Activated B cell treated with CpG ODN at 0.5 μM for 24 hours (primary cell): ENCODE measurements at regions of chr15 and their contacts with region 1.

Region 1: GRCh38 chr15:52078876-52079700 is 33.5 kb downstream of the BCL2L10 start:
- DNase-seq: peak; percentile 60
- ATAC-seq: peak; percentile 68
- H3K4me3 Mint-ChIP-seq: no peak overlapping the region
- H3K27ac Mint-ChIP-seq: no peak overlapping the region
- H3K4me1 Mint-ChIP-seq: peaks cover 23% of the 10 kb centered on the region
- H3K27me3 Mint-ChIP-seq: no peaks in the 10 kb centered on the region
- CTCF ChIP-seq: peak; percentile 76

Region 2: GRCh38 chr15:51888593-51889195 is 190.4 kb before region 1 on chr15:
- CTCF ChIA-PET with region 1: interaction called, 8 read pairs
- POLR2A ChIA-PET with region 1: no interaction called
- intact Hi-C with region 1: loop called (anchors 1 kb)
- DNase-seq: no peak
- ATAC-seq: no peak
- H3K4me3 Mint-ChIP-seq: no peak overlapping the region
- H3K27ac Mint-ChIP-seq: no peak overlapping the region
- H3K4me1 Mint-ChIP-seq: peaks cover 4% of the 10 kb centered on the region
- H3K27me3 Mint-ChIP-seq: no peaks in the 10 kb centered on the region
- CTCF ChIP-seq: peak; percentile 58

Region 3: DNA sequence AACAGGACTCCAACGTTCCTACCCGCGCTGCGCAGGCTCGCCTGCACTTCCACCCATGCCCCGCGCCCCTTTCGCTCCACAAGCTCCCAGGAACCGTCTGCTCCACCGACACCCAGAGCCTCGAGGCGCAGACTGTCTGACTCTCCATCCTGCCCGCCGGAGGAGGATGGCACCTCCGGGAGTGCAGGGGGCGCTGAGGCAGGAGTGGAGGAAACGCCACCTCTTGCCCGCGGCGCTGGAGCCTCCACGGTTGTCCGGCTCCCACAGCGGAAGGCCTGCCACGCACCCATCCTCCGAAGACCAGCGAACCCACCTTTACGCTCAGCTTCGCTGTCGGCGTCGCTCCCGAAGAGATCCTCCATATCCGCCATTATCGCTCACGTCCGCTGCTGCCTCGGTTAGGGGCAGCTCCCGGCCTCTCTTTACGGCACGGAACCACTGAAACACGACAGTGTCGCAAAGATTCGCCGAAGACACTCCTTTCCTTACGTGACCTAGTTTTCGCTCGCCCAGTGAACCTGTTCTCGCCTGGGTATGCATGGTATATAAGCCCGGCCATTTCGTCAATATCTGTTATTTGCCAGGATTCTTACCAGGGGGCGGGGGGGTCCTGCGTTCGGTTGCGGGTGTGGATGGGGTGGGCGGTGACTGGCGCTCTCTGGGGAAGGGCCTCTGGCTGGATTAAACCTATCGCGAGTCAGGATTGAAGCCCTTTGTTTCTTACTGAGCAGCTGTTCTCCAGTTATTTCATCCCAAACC is 107.5 kb before region 1 on chr15 and contains the start of gene LEO1:
- CTCF ChIA-PET with region 1: interaction called, 11 read pairs
- POLR2A ChIA-PET with region 1: interaction called, 7 read pairs
- intact Hi-C with region 1: no loop called
- DNase-seq: peak; percentile 69
- ATAC-seq: peak; percentile 96
- H3K4me3 Mint-ChIP-seq: peak within 1 kb of the TSS; percentile 100
- H3K27ac Mint-ChIP-seq: peak within 1 kb of the TSS; percentile 99
- H3K4me1 Mint-ChIP-seq: peaks cover 21% of the 10 kb centered on the region
- H3K27me3 Mint-ChIP-seq: no peaks in the 10 kb centered on the region
- CTCF ChIP-seq: no peak
- total RNA-seq, gene LEO1: 18.3 and 19.1 TPM in 2 replicates

Region 4: DNA sequence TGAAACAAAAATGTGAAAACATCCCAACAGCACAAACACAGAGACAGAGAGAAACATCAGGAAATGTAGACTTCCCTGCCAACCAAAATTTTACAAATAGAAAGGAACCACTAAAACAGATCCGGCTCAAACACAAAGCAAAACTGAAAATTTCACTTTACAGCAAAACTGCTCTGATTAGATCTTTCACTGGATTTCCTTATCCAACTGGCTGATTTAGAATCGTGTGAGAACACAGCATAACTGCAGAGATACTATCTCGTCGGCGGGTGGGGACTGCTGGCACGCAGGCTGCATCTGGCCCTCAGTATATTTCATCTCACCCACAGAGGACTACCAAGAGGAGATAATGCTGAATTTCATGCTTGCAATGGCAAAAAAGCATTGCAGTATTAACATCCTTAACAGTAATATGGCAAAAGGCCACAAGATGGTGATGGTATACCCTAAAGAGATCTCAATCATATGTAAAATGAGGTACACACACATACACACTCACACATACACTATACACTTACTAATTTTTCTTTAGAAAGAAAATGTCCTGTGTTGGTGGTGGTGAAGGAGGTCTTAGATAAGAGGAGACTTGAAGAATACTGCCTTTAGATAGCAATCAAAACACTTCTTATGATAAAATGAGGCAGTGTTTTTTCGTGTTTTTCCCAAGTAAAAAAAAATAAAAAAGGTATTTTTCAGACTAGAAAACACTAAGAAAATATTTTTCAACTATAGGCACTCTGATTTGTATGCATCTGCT is 96.9 kb before region 1 on chr15:
- CTCF ChIA-PET with region 1: interaction called, 7 read pairs
- POLR2A ChIA-PET with region 1: no interaction called
- intact Hi-C with region 1: loop called (anchors 1 kb)
- DNase-seq: no peak
- ATAC-seq: peak; percentile 90
- H3K4me3 Mint-ChIP-seq: peak overlapping the region; percentile 57
- H3K27ac Mint-ChIP-seq: no peak overlapping the region
- H3K4me1 Mint-ChIP-seq: peaks cover 9% of the 10 kb centered on the region
- H3K27me3 Mint-ChIP-seq: no peaks in the 10 kb centered on the region
- CTCF ChIP-seq: no peak

Region 5: GRCh38 chr15:52103217-52104207 is 24.4 kb after region 1 on chr15:
- CTCF ChIA-PET with region 1: interaction called, 4 read pairs
- POLR2A ChIA-PET with region 1: no interaction called
- intact Hi-C with region 1: loop called (anchors 2 kb)
- DNase-seq: no peak
- ATAC-seq: peak; percentile 69
- H3K4me3 Mint-ChIP-seq: no peak overlapping the region
- H3K27ac Mint-ChIP-seq: peak overlapping the region; percentile 27
- H3K4me1 Mint-ChIP-seq: peaks cover 38% of the 10 kb centered on the region
- H3K27me3 Mint-ChIP-seq: no peaks in the 10 kb centered on the region
- CTCF ChIP-seq: no peak

Region 6: DNA sequence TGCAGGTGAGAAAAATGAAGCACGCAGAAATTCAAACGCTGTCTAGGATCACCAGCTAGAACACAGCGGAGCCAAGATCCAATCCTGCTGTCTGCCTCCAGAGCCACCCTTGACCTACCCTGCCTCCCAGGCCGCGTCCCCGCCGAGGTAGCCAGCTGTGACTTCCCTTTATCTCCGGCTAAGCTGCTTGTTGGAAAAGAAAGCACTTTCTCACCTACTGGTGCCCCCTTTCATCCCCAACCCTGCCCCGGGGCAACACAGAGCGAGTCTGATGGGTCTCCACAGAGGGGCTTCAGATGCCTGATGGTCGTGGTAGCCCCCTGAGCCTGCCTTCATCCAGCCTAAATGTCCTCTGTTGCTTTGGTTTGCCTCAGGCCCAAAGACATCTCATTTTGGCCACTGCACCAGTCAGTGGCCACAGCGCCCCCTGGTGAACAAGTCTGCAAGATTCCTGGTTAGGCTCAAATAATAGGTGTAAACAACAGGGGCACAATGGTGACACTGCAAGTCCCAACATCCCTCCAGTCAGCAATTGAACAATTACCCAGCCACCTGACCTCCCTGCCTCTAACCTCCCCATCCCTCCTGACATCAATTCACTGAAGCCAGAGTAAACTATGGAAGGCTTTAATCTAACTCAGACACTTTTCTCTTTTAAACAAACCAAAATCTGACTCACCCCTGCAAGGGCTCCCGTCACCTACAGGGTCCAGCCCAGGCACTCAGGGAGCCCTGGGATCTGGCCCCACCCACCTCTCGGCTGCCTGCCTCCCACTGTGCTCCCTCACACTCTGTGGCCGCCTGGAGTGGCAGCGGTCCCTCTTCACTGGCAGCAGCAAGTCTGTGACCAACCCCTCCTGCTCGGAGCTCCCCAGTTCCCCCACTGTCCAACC is 60.8 kb after region 1 on chr15:
- CTCF ChIA-PET with region 1: interaction called, 5 read pairs
- POLR2A ChIA-PET with region 1: no interaction called
- intact Hi-C with region 1: loop called (anchors 2 kb)
- DNase-seq: peak; percentile 51
- ATAC-seq: no peak
- H3K4me3 Mint-ChIP-seq: no peak overlapping the region
- H3K27ac Mint-ChIP-seq: no peak overlapping the region
- H3K4me1 Mint-ChIP-seq: peaks cover 23% of the 10 kb centered on the region
- H3K27me3 Mint-ChIP-seq: no peaks in the 10 kb centered on the region
- CTCF ChIP-seq: peak; percentile 39

Region 7: DNA sequence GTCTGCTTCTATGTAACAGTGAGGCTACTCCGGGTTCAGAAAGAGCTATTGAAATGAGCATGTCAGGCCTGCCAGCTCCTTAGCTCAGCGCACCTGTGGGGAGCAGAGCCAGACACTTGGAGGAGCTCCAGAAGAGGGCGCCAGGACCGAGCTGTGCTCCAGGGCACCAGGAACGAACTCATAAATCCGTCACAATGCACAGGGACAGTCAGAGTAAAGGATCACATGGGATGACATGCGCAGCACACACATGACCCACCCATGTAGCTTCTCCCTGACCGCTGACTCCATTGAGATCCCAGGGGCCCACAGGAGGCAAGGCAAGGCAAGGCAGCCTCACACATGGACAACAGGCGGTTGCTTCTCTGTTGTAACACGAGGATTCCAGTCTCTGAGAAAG is 138.1 kb after region 1 on chr15:
- CTCF ChIA-PET with region 1: no interaction called
- POLR2A ChIA-PET with region 1: no interaction called
- intact Hi-C with region 1: no loop called
- DNase-seq: no peak
- ATAC-seq: peak; percentile 33
- H3K4me3 Mint-ChIP-seq: no peak overlapping the region
- H3K27ac Mint-ChIP-seq: no peak overlapping the region
- H3K4me1 Mint-ChIP-seq: peaks cover 35% of the 10 kb centered on the region
- H3K27me3 Mint-ChIP-seq: no peaks in the 10 kb centered on the region
- CTCF ChIP-seq: no peak

Region 8: DNA sequence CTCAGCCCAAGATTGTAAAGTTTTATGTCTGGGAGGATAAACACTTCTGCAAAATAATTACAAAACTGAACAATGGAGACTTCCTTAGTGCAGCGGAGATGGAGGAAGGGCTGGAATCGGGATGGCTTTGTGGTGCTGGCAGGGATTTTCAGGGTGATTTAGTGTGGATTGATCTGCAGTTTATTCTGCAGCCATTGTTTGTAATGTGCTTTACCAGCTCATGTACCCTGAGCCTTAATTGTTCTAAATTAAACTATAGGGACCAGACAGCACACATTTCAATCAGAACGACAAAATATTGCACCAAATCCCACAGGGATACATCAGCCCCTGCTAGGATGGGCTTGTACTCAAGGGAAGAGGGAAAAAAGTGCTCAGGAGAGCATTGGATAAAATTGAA is 814.2 kb after region 1 on chr15:
- CTCF ChIA-PET with region 1: no interaction called
- POLR2A ChIA-PET with region 1: no interaction called
- intact Hi-C with region 1: no loop called
- DNase-seq: no peak
- ATAC-seq: no peak
- H3K4me3 Mint-ChIP-seq: no peak overlapping the region
- H3K27ac Mint-ChIP-seq: no peak overlapping the region
- H3K4me1 Mint-ChIP-seq: no peaks in the 10 kb centered on the region
- H3K27me3 Mint-ChIP-seq: peaks cover 8% of the 10 kb centered on the region
- CTCF ChIP-seq: no peak